CD4-positive, alpha-beta T cell (primary cell): ENCODE measurements at regions of chr6 and their contacts with region 1.

Region 1: DNA sequence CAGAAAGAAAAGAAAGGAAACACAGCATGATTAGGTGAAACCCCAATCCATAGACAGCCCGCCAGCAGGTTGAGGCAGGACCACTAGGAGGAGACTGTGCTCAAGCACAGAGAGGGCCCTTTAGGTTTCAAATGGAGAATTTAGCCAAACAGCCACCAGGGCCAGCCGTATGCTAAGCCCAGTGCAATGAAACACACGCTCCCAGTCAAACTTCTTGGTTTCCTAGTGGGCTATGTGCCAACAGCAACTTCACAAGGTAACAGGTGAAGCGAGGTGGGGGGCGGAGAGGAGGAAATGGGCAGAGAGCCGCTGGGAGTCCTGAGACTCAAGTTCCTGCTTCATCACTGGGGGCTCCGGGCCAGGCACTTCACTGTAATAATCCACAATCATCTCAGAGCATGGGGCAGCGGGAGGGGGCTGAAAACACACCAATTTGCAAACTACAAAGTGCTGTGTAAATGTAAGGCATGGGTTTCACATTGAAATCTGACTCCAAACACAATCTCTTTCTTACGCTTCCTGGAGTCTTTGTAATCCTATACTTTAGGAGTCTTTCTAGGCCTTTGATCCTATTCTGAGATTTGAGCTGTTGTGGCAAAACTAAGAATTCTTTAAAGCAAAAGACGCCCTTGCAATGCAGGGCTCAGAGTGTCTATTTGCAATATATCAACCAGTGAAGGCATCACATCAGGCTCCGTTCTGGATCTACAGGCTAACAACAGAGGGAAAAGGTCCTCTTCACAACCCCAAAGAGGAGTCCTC is 117.3 kb downstream of the OPRM1 start:
- DNase-seq: peak; percentile 36 to 84 (median 58)
- ATAC-seq: peak; percentile 93
- H3K4me3 ChIP-seq: peak overlapping the region; percentile 44
- H3K4me3 Mint-ChIP-seq: peak overlapping the region; percentile 80
- H3K27ac ChIP-seq: peak overlapping the region; percentile 75 to 77
- H3K27ac Mint-ChIP-seq: peak overlapping the region; percentile 93
- H3K4me1 ChIP-seq: peaks cover 33% of the 10 kb centered on the region
- H3K4me1 Mint-ChIP-seq: peaks cover 68% of the 10 kb centered on the region
- H3K27me3 ChIP-seq: no peaks in the 10 kb centered on the region
- H3K27me3 Mint-ChIP-seq: no peaks in the 10 kb centered on the region
- CTCF ChIP-seq: peak; percentile 78

Region 2: DNA sequence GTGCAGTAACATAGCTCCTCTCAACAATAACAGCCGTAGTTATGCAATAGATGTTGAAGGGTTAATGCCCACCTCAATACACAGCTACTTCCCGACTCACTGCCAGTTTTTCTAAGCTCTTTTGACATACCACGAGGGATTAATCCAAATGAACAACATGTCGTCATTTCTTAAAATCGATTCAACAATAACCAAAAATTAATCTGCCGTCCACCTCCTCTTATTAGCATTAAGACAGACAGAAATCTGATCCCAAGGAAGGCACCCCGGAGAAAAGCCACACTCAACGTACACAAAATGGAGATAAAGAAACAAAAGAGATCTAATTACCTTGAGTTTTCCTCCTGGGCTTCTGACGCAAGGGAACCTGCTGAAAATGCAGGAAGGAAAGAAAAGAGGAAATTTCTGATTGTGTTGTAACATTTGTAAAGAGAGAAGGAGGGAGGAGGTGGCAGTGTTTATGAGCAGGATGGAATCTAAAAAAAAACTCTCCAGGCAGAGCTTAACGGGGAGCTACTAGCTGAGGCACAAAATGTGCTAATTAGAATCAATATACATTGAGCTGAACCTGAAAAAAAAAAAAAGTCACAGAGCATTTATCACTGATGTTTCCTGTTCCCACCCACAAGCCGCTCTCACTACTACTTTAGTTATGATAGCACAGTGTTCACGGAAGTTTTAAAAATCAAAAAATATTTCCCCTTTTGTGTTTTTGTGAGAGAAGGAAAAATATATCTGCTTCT is 91.0 kb after region 1 on chr6:
- CTCF ChIA-PET with region 1: interaction called, 9 read pairs
- POLR2A ChIA-PET with region 1: interaction called, 25 read pairs
- intact Hi-C with region 1: no loop called
- DNase-seq: peak in 5 of 14 experiments; percentile 19 to 78 (median 63)
- ATAC-seq: peak; percentile 54
- H3K4me3 ChIP-seq: peak overlapping the region; percentile 72
- H3K4me3 Mint-ChIP-seq: peak overlapping the region; percentile 95
- H3K27ac ChIP-seq: peak overlapping the region; percentile 75 to 88
- H3K27ac Mint-ChIP-seq: peak overlapping the region; percentile 93
- H3K4me1 ChIP-seq: peaks cover 42% of the 10 kb centered on the region
- H3K4me1 Mint-ChIP-seq: peaks cover 94% of the 10 kb centered on the region
- H3K27me3 ChIP-seq: no peaks in the 10 kb centered on the region
- H3K27me3 Mint-ChIP-seq: no peaks in the 10 kb centered on the region
- CTCF ChIP-seq: no peak

Region 3: DNA sequence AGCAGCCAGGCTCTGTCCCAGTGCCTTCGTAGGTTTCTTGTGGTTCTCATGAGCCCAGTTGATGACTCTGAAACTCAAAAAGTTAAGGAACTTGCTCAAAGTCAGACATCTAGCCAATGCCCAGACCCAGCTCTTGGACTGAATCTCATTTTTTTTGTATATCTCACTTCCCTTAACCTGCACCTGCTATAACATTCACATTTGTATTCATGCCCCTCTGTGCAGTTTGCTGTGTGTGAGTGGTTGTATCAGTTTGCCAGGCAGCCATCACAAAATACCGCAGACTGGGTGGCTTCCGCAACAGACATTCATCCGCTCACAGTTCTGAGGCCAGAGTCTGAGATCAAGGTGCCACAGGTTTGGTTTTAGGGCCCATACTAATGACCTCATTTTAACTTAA is 150.4 kb after region 1 on chr6:
- CTCF ChIA-PET with region 1: no interaction called
- POLR2A ChIA-PET with region 1: no interaction called
- intact Hi-C with region 1: no loop called
- DNase-seq: peak in 1 of 14 experiments; percentile 13
- ATAC-seq: no peak
- H3K4me3 ChIP-seq: no peak overlapping the region
- H3K4me3 Mint-ChIP-seq: no peak overlapping the region
- H3K27ac ChIP-seq: no peak overlapping the region
- H3K27ac Mint-ChIP-seq: no peak overlapping the region
- H3K4me1 ChIP-seq: peaks cover 6% of the 10 kb centered on the region
- H3K4me1 Mint-ChIP-seq: peaks cover 6% of the 10 kb centered on the region
- H3K27me3 ChIP-seq: no peaks in the 10 kb centered on the region
- H3K27me3 Mint-ChIP-seq: no peaks in the 10 kb centered on the region
- CTCF ChIP-seq: no peak

Region 4: GRCh38 chr6:154370545-154370944 is 214.2 kb after region 1 on chr6:
- CTCF ChIA-PET with region 1: interaction called, 4 read pairs
- POLR2A ChIA-PET with region 1: interaction called, 4 read pairs
- intact Hi-C with region 1: loop called (anchors 1 kb)
- DNase-seq: peak in 5 of 14 experiments; percentile 4 to 55 (median 31)
- ATAC-seq: peak; percentile 49
- H3K4me3 ChIP-seq: no peak overlapping the region
- H3K4me3 Mint-ChIP-seq: no peak overlapping the region
- H3K27ac ChIP-seq: no peak overlapping the region
- H3K27ac Mint-ChIP-seq: no peak overlapping the region
- H3K4me1 ChIP-seq: no peaks in the 10 kb centered on the region
- H3K4me1 Mint-ChIP-seq: peaks cover 8% of the 10 kb centered on the region
- H3K27me3 ChIP-seq: no peaks in the 10 kb centered on the region
- H3K27me3 Mint-ChIP-seq: no peaks in the 10 kb centered on the region
- CTCF ChIP-seq: peak; percentile 55

Region 5: GRCh38 chr6:154408891-154409500 is 252.7 kb after region 1 on chr6:
- CTCF ChIA-PET with region 1: no interaction called
- POLR2A ChIA-PET with region 1: no interaction called
- intact Hi-C with region 1: loop called in 1 of 2 experiments (anchors 1 kb)
- DNase-seq: peak in 5 of 14 experiments; percentile 2 to 20 (median 9)
- ATAC-seq: no peak
- H3K4me3 ChIP-seq: no peak overlapping the region
- H3K4me3 Mint-ChIP-seq: no peak overlapping the region
- H3K27ac ChIP-seq: no peak overlapping the region
- H3K27ac Mint-ChIP-seq: no peak overlapping the region
- H3K4me1 ChIP-seq: no peaks in the 10 kb centered on the region
- H3K4me1 Mint-ChIP-seq: no peaks in the 10 kb centered on the region
- H3K27me3 ChIP-seq: no peaks in the 10 kb centered on the region
- H3K27me3 Mint-ChIP-seq: no peaks in the 10 kb centered on the region
- CTCF ChIP-seq: no peak

Region 6: DNA sequence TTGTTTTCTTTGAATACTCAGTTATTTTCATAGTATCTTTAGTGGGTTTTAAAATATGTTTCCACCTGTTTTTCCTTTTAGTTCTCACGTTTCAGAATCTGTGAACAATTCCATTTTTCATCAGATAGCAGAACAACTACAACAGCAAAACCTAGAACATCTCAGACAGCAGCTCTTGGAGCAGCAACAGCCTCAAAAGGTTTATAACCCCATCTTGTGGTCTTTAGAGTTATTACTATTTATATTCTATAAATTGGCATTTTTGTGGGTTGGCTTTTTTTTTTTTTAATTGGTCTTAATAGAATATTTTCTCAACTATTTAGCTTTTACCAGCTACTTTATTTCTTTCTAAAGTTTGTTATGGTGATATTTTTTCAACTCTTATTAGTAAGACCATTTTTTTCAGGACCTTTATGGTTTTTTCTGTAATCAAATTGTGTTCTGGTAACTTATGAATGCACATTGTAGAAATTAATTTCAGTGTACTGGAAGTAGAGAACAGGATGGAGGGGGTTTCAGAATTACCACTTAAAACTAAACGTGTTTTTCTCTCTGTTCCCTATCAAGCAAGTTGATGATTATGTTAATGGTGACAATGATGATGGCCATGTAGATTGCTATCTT is 649.1 kb after region 1 on chr6:
- CTCF ChIA-PET with region 1: no interaction called
- POLR2A ChIA-PET with region 1: no interaction called
- intact Hi-C with region 1: loop called (anchors 1 to 10 kb)
- DNase-seq: peak in 4 of 14 experiments; percentile 12 to 65 (median 60)
- ATAC-seq: peak; percentile 88
- H3K4me3 ChIP-seq: no peak overlapping the region
- H3K4me3 Mint-ChIP-seq: no peak overlapping the region
- H3K27ac ChIP-seq: no peak overlapping the region
- H3K27ac Mint-ChIP-seq: peak overlapping the region; percentile 10
- H3K4me1 ChIP-seq: no peaks in the 10 kb centered on the region
- H3K4me1 Mint-ChIP-seq: peaks cover 6% of the 10 kb centered on the region
- H3K27me3 ChIP-seq: no peaks in the 10 kb centered on the region
- H3K27me3 Mint-ChIP-seq: no peaks in the 10 kb centered on the region
- CTCF ChIP-seq: peak; percentile 72